ENCODE measurements at regions of chr6 and their contacts with region 1.

Region 1: DNA sequence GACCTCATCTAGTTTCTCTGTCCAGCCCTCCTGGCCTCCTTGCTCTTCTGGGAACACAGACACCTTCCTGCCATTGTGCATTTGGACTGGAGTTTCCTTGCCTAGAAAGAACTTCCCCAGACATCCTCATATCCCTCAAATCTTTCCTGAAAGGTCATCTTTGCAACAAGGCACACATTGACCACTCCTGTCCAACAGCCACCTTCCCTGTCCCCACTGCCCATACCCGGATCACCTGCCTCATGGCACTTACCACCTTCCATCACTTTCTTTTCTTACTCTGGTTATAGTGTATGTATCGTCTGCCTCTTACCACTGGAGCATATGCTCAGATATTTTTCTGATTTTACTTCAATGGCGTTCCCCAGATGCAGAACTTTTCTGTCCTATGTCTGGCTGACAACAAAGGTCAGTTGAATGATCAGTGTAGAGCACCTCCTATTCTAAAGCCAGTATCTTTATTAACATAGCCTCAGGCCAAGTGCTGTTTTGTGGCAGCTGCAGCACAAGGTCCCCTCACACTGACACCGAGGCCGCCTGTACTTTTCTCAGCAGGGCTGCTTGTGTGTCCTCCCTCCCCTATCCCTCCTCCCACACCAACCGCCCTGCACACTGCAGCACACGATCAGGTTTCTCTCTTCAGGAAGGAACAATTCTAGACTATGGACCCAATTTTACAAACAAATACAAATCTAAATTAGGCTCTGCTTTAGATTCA is 4.1 kb downstream of the HLA-C start:
- DNase-seq: peak in 1 of 7 donors; percentile 64
- H3K4me3 ChIP-seq: no peak overlapping the region
- H3K27ac ChIP-seq: no peak overlapping the region
- H3K4me1 ChIP-seq: peaks cover 0 to 4% of the 10 kb centered on the region in 2 donors
- H3K27me3 ChIP-seq: no peaks in the 10 kb centered on the region
- CTCF ChIP-seq: no peak
- POLR2A ChIP-seq: no peak

Region 2: DNA sequence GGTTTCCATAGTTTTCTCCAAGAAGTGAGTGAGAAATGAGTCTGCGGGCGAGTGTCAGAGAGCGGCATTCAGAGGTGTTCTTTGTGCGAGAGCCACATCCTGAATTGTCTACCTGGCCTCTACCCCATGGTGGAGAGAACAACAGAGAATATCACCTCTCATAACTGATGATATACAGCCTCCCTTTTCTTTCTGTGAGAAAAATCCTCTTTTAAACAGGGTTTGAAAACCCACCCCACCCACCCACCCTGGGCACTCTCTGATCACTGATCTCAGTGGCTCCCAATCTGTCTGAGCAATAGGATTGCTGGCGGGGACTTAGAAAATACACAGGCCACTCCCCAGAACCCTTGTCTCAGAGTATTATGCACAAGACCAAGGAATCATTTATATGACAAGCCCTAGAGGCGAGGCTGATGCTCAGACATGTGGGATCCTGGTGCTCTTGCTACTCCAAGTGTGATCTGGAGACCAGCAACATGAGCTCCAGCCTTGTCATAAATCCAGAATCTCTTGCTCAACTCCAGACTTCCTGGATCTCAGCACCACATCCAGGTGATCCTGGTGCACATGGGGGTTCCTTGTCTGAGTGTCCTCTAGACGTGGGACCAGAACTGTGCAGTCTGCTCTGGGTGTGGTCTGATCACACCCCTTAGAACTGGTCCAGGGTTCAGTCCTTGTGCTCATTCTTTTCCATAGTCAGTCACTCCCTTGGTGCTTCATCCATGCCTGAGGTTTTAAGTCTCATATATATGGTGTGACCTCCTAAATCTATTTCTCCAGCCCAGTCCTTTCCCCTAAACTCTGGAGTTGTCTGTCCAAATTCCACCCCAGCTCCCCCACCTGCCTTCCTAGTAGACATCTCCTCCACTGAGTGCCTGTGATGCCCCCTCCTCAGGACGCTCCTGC is 83.8 kb after region 1 on chr6:
- intact Hi-C with region 1: loop called in 1 of 2 experiments (anchors 5 kb)
- DNase-seq: no peak
- H3K4me3 ChIP-seq: no peak overlapping the region
- H3K27ac ChIP-seq: no peak overlapping the region
- H3K4me1 ChIP-seq: peaks cover 0 to 5% of the 10 kb centered on the region in 2 donors
- H3K27me3 ChIP-seq: no peaks in the 10 kb centered on the region
- CTCF ChIP-seq: no peak
- POLR2A ChIP-seq: no peak

Measured in adrenal gland (tissue), 19 donors.